ENCODE measurements at regions of chr18 and their contacts with region 1.

Region 1: GRCh38 chr18:58870130-58870529 is 5.5 kb downstream of the ZNF532 start:
- DNase-seq: no peak
- H3K4me3 ChIP-seq: no peak overlapping the region
- CTCF ChIP-seq: no peak

Region 2: DNA sequence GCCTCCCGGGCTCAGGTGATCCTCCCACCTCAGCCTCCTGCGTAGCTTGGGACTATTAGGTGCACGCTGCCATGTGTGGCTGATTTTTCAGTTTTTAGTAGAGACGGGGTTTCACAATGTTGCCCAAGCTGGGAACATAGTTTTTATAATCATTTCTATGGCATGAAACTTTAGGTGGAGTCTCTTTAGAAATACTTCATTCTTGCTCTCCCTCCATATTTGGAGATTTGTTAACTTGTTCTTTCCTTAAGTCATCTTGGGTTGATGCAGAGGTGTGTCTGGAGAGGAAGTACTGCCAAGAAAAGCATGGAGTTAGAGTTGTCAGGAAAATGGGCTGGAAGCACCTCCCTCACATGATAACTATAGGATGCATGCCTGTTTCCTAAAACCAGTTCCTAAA is 11.9 kb after region 1 on chr18:
- CTCF ChIA-PET with region 1: interaction called, 5 read pairs
- POLR2A ChIA-PET with region 1: interaction called, 19 read pairs
- DNase-seq: peak; percentile 61
- H3K4me3 ChIP-seq: no peak overlapping the region
- CTCF ChIP-seq: no peak